ENCODE measurements at regions of chr11 and their contacts with region 1.

Region 1: DNA sequence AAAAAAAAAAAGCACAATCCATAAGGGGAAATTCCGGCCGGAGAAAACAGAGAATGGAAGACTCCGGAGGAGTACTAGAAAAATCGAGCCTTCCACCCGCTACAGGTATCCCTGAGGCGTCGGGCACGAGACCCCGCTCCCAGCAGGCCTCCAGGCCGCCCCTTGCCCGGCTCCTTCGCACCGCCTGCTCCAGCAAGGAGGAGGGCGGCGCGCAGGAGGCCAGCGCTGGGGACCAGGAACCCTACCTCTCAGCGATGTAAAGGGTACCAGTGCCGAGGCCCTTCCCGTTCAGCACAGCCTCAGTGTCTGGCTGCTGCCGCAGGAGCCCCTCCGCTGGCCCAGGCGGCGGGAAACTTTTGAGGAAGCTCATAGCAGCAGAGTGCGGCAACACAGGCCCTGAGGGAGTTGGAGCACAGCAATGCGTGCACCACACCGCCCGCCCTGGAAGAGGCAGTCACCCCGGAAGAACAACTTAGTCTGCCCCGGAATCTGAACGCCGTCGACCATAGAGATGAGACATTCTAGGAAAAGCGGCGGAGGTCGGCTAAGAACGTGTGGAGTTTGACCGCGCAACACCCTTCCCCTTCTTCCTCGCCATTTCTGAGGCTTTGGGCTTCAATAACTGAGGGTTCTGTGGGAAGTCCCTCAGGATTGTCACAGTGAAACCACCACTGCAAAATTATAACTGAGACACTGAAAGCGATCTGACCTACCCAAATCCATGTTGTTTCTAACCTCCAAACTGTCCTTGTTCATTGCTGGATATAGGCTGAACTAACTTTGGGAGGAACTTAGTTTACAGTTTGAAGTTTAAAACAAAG is at the start of gene CLNS1A:
- DNase-seq: peak; percentile 64 to 85
- H3K4me3 ChIP-seq: peak within 1 kb of the TSS; percentile 83 to 94 (median 90)
- H3K27ac ChIP-seq: peak within 1 kb of the TSS; percentile 76
- H3K4me1 ChIP-seq: peaks cover 2 to 7% (median 3%) of the 10 kb centered on the region in 4 experiments; a peak in 6 of 7 replicates
- H3K27me3 ChIP-seq: no peaks in the 10 kb centered on the region
- CTCF ChIP-seq: peak in 1 of 3 experiments; percentile 4; a peak in 1 of 4 replicates
- EP300 ChIP-seq: no peak
- POLR2A ChIP-seq: peak; percentile 81 to 95
- RAD21 ChIP-seq: no peak
- total RNA-seq, gene CLNS1A: 176 and 177 TPM in 2 replicates

Region 2: DNA sequence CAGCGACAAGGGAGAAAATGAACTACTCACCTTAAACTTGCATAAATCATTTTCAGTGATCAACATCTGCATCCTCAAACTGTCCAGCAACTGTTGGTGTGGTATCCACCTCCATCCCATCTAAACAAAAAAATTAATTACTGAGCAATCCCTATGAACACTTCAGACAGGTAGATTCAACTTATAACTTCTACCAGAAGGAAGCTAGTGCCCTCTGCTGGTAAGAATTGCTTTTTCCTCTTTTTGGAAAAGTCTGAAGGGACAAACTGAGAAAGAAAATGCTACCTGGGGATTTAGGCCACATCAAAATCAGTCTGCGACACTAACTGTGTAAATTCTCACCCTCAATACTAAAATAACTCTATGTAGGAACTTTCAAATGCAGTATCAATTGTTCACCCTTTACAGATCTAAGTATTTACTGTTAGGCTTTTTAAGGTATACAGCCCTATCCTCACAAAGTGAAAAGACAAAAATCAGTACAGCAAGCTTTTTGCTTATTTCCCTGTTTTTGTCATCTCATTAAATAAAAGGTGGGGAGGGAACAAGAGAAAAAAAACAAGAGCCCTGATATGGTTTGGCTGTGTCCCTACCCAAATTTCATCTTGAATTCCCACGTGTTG is 17.9 kb before region 1 on chr11:
- CTCF ChIA-PET with region 1: interaction called, 13 read pairs
- POLR2A ChIA-PET with region 1: interaction called, 5 read pairs
- DNase-seq: no peak
- H3K4me3 ChIP-seq: no peak overlapping the region
- H3K27ac ChIP-seq: no peak overlapping the region
- H3K4me1 ChIP-seq: no peaks in the 10 kb centered on the region
- H3K27me3 ChIP-seq: no peaks in the 10 kb centered on the region
- CTCF ChIP-seq: peak in 2 of 3 experiments; percentile 37 to 68; a peak in 2 of 4 replicates
- EP300 ChIP-seq: no peak
- POLR2A ChIP-seq: no peak
- RAD21 ChIP-seq: peak; percentile 71 to 75

Region 3: GRCh38 chr11:77647654-77648305 is 10.2 kb after region 1 on chr11:
- CTCF ChIA-PET with region 1: interaction called, 4 read pairs
- POLR2A ChIA-PET with region 1: interaction called, 13 read pairs
- DNase-seq: no peak
- H3K4me3 ChIP-seq: no peak overlapping the region
- H3K27ac ChIP-seq: no peak overlapping the region
- H3K4me1 ChIP-seq: no peaks in the 10 kb centered on the region
- H3K27me3 ChIP-seq: no peaks in the 10 kb centered on the region
- CTCF ChIP-seq: no peak
- EP300 ChIP-seq: no peak
- POLR2A ChIP-seq: no peak
- RAD21 ChIP-seq: no peak